Left ventricle myocardium inferior (tissue), 1 donor: ENCODE measurements at regions of chr9 and their contacts with region 1.

Region 1: DNA sequence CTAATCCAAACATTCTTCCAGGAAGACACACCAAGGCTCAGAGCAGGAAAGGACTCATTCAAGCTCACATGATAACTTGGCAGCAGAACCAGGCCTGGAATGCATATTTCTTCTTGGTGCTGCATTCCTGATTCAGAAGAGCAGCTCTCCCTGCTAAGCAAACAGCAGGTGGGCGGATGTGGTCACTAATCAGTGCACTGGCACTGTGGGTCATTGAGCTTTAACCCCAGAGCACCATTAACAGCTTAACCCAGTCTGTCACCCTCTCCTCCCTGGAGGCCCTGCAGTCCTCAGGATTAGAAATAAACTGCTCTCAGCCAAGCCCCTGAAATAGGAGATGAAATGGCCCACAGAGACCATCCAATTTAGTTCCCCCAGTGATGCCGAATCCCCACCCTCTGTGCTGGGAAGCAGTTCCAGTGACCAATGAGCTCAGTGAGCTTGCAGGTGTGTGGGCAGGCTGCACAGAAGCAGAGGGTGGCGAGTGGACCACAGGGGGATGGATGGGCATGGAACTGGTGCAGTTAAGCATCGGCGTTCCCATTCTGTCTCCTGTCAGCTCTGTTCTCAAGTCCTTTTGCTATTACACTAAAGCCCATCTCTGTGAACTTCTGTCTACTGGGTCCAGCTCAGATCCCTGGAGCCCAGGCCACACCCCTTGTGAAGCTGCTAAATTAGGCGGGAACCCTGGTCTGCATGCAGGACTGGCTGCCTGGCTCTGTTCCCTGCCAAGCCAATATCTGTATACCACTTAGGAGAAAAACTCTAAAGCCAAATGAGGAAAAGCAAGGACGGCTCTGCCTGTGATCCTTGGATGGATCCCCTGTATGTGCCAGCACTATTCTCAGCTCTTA is 16.6 kb upstream of the MEGF9 start:
- DNase-seq: peak; percentile 50
- H3K4me3 ChIP-seq: no peak overlapping the region
- H3K27ac ChIP-seq: peak overlapping the region; percentile 73
- H3K4me1 ChIP-seq: peaks cover 42% of the 10 kb centered on the region
- H3K27me3 ChIP-seq: no peaks in the 10 kb centered on the region
- CTCF ChIP-seq: no peak

Region 2: GRCh38 chr9:120619751-120620655 is 110.9 kb before region 1 on chr9:
- intact Hi-C with region 1: loop called (anchors 10 kb)
- DNase-seq: no peak
- H3K4me3 ChIP-seq: no peak overlapping the region
- H3K27ac ChIP-seq: no peak overlapping the region
- H3K4me1 ChIP-seq: peaks cover 2% of the 10 kb centered on the region
- H3K27me3 ChIP-seq: no peaks in the 10 kb centered on the region
- CTCF ChIP-seq: peak; percentile 88